ENCODE measurements at regions of chr10 and their contacts with region 1.

Region 1: GRCh38 chr10:17228091-17228940 is at the start of gene VIM:
- DNase-seq: peak; percentile 72 to 84 (median 81)
- ATAC-seq: peak; percentile 40
- H3K4me3 ChIP-seq: peak within 1 kb of the TSS; percentile 93
- H3K4me3 Mint-ChIP-seq: peak within 1 kb of the TSS; percentile 87 to 100 (median 97)
- H3K27ac ChIP-seq: peak within 1 kb of the TSS; percentile 83
- H3K27ac Mint-ChIP-seq: peak within 1 kb of the TSS; percentile 91 to 100 (median 97)
- H3K4me1 ChIP-seq: peaks cover 34 to 39% of the 10 kb centered on the region in 2 donors
- H3K4me1 Mint-ChIP-seq: peaks cover 25 to 61% (median 55%) of the 10 kb centered on the region in 7 donors
- H3K27me3 ChIP-seq: no peaks in the 10 kb centered on the region
- H3K27me3 Mint-ChIP-seq: peaks cover 0 to 3% (median 0%) of the 10 kb centered on the region in 5 donors
- total RNA-seq, gene VIM: 498 to 2,181 (median 1,002) TPM

Region 2: GRCh38 chr10:16828114-16828568 is 400.2 kb before region 1 on chr10:
- CTCF ChIA-PET with region 1: no interaction called
- POLR2A ChIA-PET with region 1: interaction called, 6 read pairs
- intact Hi-C with region 1: loop called in 1 of 2 experiments (anchors 1 kb)
- DNase-seq: peak; percentile 22 to 78 (median 69)
- ATAC-seq: peak; percentile 96
- H3K4me3 ChIP-seq: no peak overlapping the region
- H3K4me3 Mint-ChIP-seq: no peak overlapping the region
- H3K27ac ChIP-seq: no peak overlapping the region
- H3K27ac Mint-ChIP-seq: peak overlapping the region in 3 of 9 donors; percentile 63 to 84 (median 82)
- H3K4me1 ChIP-seq: no peaks in the 10 kb centered on the region
- H3K4me1 Mint-ChIP-seq: peaks cover 0 to 12% (median 8%) of the 10 kb centered on the region in 7 donors
- H3K27me3 ChIP-seq: no peaks in the 10 kb centered on the region
- H3K27me3 Mint-ChIP-seq: peaks cover 0 to 9% (median 0%) of the 10 kb centered on the region in 5 donors

Region 3: GRCh38 chr10:17023386-17024298 is 204.7 kb before region 1 on chr10:
- CTCF ChIA-PET with region 1: no interaction called
- POLR2A ChIA-PET with region 1: interaction called, 24 read pairs
- intact Hi-C with region 1: loop called (anchors 1 kb)
- DNase-seq: peak in 8 of 9 donors; percentile 60 to 89 (median 78)
- ATAC-seq: peak; percentile 86
- H3K4me3 ChIP-seq: no peak overlapping the region
- H3K4me3 Mint-ChIP-seq: peak overlapping the region; percentile 5 to 89 (median 64)
- H3K27ac ChIP-seq: peak overlapping the region; percentile 82
- H3K27ac Mint-ChIP-seq: peak overlapping the region; percentile 74 to 99 (median 91)
- H3K4me1 ChIP-seq: peaks cover 46 to 59% of the 10 kb centered on the region in 2 donors
- H3K4me1 Mint-ChIP-seq: peaks cover 32 to 72% (median 67%) of the 10 kb centered on the region in 7 donors
- H3K27me3 ChIP-seq: no peaks in the 10 kb centered on the region
- H3K27me3 Mint-ChIP-seq: peaks cover 0 to 9% (median 0%) of the 10 kb centered on the region in 5 donors

Region 4: GRCh38 chr10:17206210-17206709 is 22.1 kb before region 1 on chr10:
- CTCF ChIA-PET with region 1: interaction called, 18 read pairs
- POLR2A ChIA-PET with region 1: interaction called, 167 read pairs
- intact Hi-C with region 1: loop called (anchors 1 kb)
- DNase-seq: peak in 8 of 9 donors; percentile 11 to 79 (median 71)
- ATAC-seq: peak; percentile 79
- H3K4me3 ChIP-seq: no peak overlapping the region
- H3K4me3 Mint-ChIP-seq: peak overlapping the region; percentile 55 to 78 (median 64)
- H3K27ac ChIP-seq: peak overlapping the region; percentile 79
- H3K27ac Mint-ChIP-seq: peak overlapping the region; percentile 88 to 99 (median 96)
- H3K4me1 ChIP-seq: peaks cover 17 to 23% of the 10 kb centered on the region in 2 donors
- H3K4me1 Mint-ChIP-seq: peaks cover 18 to 47% (median 43%) of the 10 kb centered on the region in 7 donors
- H3K27me3 ChIP-seq: no peaks in the 10 kb centered on the region
- H3K27me3 Mint-ChIP-seq: no peaks in the 10 kb centered on the region

Region 5: GRCh38 chr10:17430647-17431355 is 202.5 kb after region 1 on chr10:
- CTCF ChIA-PET with region 1: no interaction called
- POLR2A ChIA-PET with region 1: interaction called, 24 read pairs
- intact Hi-C with region 1: loop called (anchors 1 to 2 kb)
- DNase-seq: peak in 8 of 9 donors; percentile 44 to 68 (median 60)
- ATAC-seq: peak; percentile 43
- H3K4me3 ChIP-seq: no peak overlapping the region
- H3K4me3 Mint-ChIP-seq: peak overlapping the region in 9 of 10 donors; percentile 11 to 81 (median 42)
- H3K27ac ChIP-seq: no peak overlapping the region
- H3K27ac Mint-ChIP-seq: peak overlapping the region in 8 of 9 donors; percentile 20 to 97 (median 90)
- H3K4me1 ChIP-seq: peaks cover 37 to 43% of the 10 kb centered on the region in 2 donors
- H3K4me1 Mint-ChIP-seq: peaks cover 43 to 58% (median 53%) of the 10 kb centered on the region in 7 donors
- H3K27me3 ChIP-seq: no peaks in the 10 kb centered on the region
- H3K27me3 Mint-ChIP-seq: peaks cover 0 to 24% (median 0%) of the 10 kb centered on the region in 5 donors

Measured in naive thymus-derived CD4-positive, alpha-beta T cell (primary cell).